ENCODE measurements at regions of chr2 and their contacts with region 1.

Region 1: DNA sequence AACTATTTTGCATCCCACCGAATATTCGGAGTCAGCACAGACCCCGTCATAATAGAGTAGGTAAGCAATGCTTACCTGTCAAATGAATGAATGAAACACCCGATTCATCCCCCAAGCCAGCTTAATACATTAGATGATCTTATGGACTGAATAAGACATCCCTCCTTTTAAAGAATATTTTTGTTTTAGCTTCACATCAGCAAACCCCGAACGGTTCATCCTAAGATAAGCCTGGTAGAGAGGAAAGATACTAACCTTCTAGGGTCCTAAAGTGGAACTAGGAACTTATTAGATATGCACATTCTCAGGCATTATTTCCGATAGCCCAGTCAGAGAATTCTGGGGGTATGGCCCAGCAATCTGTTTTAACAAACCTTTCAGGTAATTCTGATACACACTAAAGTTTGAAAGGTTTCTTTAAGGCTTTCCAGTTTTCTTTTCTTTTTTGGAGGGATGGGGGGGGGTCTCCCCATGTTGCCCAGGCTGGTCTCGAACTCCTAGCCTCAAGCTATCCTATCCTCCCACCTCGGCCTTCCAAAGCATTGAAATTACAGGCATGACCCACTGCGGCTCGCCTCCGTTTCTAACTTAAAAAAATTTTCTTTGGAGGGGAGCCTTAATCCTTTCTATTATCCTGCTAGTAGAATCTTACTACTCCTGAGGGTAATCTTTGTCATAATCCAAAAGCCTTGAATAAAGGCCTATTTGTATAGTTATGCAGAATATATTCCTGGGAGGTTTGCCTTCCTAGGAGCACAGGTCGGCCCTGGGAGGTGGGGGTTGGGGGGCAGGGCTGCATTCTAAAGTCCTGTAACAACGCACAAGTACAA is 1.0 kb upstream of the ACTR3 start:
- DNase-seq: no peak
- H3K4me3 ChIP-seq: peak overlapping the region; percentile 56
- H3K27me3 ChIP-seq: no peaks in the 10 kb centered on the region
- CTCF ChIP-seq: no peak

Region 2: DNA sequence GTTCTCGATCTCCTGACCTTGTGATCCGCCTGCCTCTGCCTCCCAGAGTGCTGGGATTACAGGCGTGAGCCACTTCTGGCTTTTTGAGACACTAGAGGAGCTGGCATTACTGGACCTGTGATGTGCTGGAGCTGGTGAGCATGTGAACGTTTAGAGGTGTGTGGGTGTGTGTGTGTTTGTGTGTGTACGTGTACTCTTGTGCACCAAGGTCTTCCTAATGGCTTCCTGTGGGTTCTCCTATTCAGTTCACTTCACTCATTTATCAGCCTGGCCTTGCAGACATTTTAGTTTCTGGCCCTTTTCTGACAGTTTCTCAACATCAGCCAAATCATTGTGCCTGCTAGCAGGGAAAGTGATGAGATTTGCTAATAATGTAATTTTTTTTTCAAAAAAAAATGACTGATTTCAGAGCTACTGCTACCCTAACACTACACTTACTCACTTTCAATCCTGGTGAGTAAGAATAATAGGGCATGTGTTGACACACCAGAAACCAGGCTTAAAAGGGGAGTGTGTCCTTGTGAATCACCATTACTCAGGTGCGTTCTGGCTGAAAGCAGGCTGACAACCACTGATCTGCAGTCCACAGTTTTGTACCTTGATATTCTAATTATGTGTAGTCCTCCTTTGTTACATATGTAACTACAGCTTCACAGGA is 40.0 kb before region 1 on chr2:
- CTCF ChIA-PET with region 1: no interaction called
- POLR2A ChIA-PET with region 1: interaction called, 19 read pairs
- DNase-seq: no peak
- H3K4me3 ChIP-seq: no peak overlapping the region
- H3K27me3 ChIP-seq: no peaks in the 10 kb centered on the region
- CTCF ChIP-seq: no peak

Region 3: GRCh38 chr2:113872201-113872600 is 16.7 kb before region 1 on chr2:
- CTCF ChIA-PET with region 1: no interaction called
- POLR2A ChIA-PET with region 1: no interaction called
- DNase-seq: peak; percentile 51
- H3K4me3 ChIP-seq: no peak overlapping the region
- H3K27me3 ChIP-seq: no peaks in the 10 kb centered on the region
- CTCF ChIP-seq: no peak